Mammary epithelial cell (primary cell): ENCODE measurements at regions of chr1 and their contacts with region 1.

Region 1: DNA sequence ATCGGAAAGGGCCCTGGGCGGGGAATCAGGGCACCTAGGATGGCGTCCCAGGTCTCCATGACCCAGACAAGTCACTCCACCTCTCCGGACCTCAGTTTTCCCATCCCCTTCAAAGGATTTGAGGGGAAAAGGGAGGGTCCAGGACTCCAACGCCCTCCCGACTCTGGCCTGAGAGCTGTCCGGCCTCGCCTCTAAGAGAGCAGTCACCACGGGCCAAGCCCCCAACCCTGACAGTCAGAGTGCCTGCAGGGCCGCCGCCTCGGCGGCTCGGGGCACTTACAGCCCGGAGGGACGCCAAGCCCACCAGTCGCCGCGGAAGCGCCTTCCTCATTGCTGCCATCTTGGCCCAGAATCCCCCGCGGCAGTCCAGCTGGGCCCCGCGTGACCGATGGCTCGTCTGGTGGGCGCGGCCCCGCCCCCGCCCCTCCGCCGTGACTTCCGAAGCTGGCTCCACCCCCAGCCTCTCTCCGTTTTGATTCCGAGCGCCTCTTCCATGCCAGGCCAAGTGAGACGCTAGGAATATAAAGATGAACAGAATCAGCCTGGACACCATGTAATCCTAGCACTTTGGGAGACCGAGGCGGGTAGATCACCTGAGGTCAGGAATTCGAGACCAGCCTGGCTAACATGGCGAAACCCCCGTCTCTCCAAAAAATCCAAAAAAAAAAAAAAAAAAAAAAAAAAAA is at the start of gene HMGCL:
- DNase-seq: peak; percentile 83
- H3K4me3 ChIP-seq: peak within 1 kb of the TSS; percentile 77 to 98 (median 97)
- H3K27ac ChIP-seq: peak within 1 kb of the TSS; percentile 72
- H3K4me1 ChIP-seq: peaks cover 7% of the 10 kb centered on the region
- H3K27me3 ChIP-seq: no peaks in the 10 kb centered on the region
- CTCF ChIP-seq: no peak
- total RNA-seq, gene HMGCL: 31.5 to 33.0 TPM

Region 2: DNA sequence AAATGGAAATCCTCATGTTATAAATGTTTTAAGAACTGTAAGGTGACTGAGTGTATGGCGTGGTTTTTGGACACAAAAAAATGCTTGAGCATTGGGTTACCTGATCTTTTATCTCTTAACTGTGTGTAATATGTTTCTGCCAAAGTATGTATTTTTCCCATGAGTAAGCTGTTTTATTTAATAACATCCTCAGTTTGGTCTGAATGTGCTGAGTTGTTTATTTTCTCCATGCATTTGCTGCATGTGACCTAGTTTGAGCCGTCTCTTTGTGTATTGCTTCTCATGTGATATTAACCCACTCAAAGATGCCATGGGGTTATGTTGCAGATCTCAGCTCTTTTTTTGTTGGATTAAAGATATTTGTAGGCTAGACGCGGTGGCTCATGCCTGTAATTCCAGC is 40.4 kb before region 1 on chr1:
- CTCF ChIA-PET with region 1: no interaction called
- dilution Hi-C with region 1: loop called (anchors 5 kb)
- in situ Hi-C with region 1: no loop called
- intact Hi-C with region 1: no loop called
- DNase-seq: no peak
- H3K4me3 ChIP-seq: no peak overlapping the region
- H3K27ac ChIP-seq: no peak overlapping the region
- H3K4me1 ChIP-seq: peaks cover 15% of the 10 kb centered on the region
- H3K27me3 ChIP-seq: no peaks in the 10 kb centered on the region
- CTCF ChIP-seq: no peak

Region 3: GRCh38 chr1:23908493-23909341 is 83.5 kb after region 1 on chr1:
- CTCF ChIA-PET with region 1: no interaction called
- dilution Hi-C with region 1: loop called (anchors 5 kb)
- in situ Hi-C with region 1: no loop called
- intact Hi-C with region 1: no loop called
- DNase-seq: no peak
- H3K4me3 ChIP-seq: no peak overlapping the region
- H3K27ac ChIP-seq: no peak overlapping the region
- H3K4me1 ChIP-seq: peaks cover 7% of the 10 kb centered on the region
- H3K27me3 ChIP-seq: no peaks in the 10 kb centered on the region
- CTCF ChIP-seq: no peak